PC-9 (cell line): ENCODE measurements at regions of chr3 and their contacts with region 1.

Region 1: DNA sequence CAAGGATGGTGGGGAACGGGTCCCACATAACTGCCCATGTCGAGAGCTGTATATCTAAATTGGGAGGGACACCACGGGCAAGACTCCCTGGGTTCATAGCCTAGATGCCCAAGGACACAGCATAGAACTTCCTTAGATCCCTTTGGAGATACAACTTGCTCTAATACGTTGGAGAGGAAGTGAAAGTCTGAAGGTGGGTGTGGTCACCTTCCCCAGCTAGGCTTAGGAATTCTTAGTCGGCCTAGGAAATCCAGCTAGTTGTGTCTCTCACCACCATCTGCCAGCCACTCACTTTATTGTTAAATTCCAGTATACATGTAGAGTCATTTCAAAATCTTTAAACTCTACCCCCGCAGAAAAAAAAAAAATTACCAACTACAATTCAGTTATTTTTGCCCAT is 1377.5 kb downstream of the SI start:
- DNase-seq: no peak
- H3K4me3 ChIP-seq: no peak overlapping the region
- H3K27ac ChIP-seq: no peak overlapping the region
- H3K4me1 ChIP-seq: peaks cover 17% of the 10 kb centered on the region
- H3K27me3 ChIP-seq: no peaks in the 10 kb centered on the region
- CTCF ChIP-seq: no peak

Region 2: DNA sequence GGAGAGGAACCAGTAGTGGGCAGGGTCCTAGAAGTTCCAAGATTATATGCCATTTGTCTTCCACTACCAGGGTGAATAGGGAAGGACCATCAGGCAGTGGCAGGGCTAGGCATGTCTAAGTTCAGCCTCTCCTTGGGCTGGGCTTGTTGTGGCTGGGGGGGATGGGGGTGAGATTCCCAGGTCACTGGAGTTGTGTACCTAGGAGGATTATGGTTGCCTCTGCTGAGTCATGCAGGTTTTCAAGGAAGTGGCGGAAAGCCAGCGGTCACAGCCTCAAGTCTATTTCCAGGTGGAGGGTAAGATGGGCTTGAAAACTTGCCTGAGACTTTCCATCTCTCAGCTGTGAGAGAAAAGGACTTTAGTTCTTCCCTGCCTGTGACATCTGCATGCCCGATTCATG is 29.6 kb before region 1 on chr3:
- CTCF ChIA-PET with region 1: no interaction called
- POLR2A ChIA-PET with region 1: no interaction called
- intact Hi-C with region 1: loop called (anchors 1 kb)
- DNase-seq: peak in 1 of 2 experiments; percentile 29
- H3K4me3 ChIP-seq: no peak overlapping the region
- H3K27ac ChIP-seq: no peak overlapping the region
- H3K4me1 ChIP-seq: no peaks in the 10 kb centered on the region
- H3K27me3 ChIP-seq: no peaks in the 10 kb centered on the region
- CTCF ChIP-seq: no peak